ENCODE measurements at regions of chr4 and their contacts with region 1.

Region 1: GRCh38 chr4:88369936-88370335 is 8.7 kb upstream of the HERC6 start:
- DNase-seq: no peak
- ATAC-seq: no peak
- H3K4me3 ChIP-seq: no peak overlapping the region
- H3K27ac ChIP-seq: no peak overlapping the region
- H3K4me1 ChIP-seq: no peaks in the 10 kb centered on the region
- CTCF ChIP-seq: no peak
- EP300 ChIP-seq: no peak
- POLR2A ChIP-seq: no peak
- RAD21 ChIP-seq: no peak

Region 2: GRCh38 chr4:88341227-88342192 is 28.4 kb before region 1 on chr4:
- CTCF ChIA-PET with region 1: interaction called, 10 read pairs
- POLR2A ChIA-PET with region 1: no interaction called
- DNase-seq: peak; percentile 41 to 57
- ATAC-seq: peak; percentile 91 to 92
- H3K4me3 ChIP-seq: no peak overlapping the region
- H3K27ac ChIP-seq: peak overlapping the region in 1 of 2 experiments; percentile 34; a peak in 2 of 6 replicates
- H3K4me1 ChIP-seq: peaks cover 12% of the 10 kb centered on the region
- CTCF ChIP-seq: no peak
- EP300 ChIP-seq: no peak
- POLR2A ChIP-seq: no peak
- RAD21 ChIP-seq: no peak

Measured in A549 (cell line).